ENCODE measurements at regions of chr10 and their contacts with region 1.

Region 1: GRCh38 chr10:62594093-62594520 is 210.4 kb upstream of the ADO start:
- DNase-seq: peak in 4 of 6 donors; percentile 18 to 76 (median 51)
- ATAC-seq: peak; percentile 56 to 96 (median 94)
- H3K4me3 ChIP-seq: no peak overlapping the region
- H3K27ac ChIP-seq: no peak overlapping the region
- H3K4me1 ChIP-seq: no peaks in the 10 kb centered on the region
- H3K27me3 ChIP-seq: no peaks in the 10 kb centered on the region
- CTCF ChIP-seq: peak; percentile 32 to 88 (median 77)

Region 2: GRCh38 chr10:62491597-62491996 is 102.5 kb before region 1 on chr10:
- intact Hi-C with region 1: no loop called
- DNase-seq: no peak
- ATAC-seq: no peak
- H3K4me3 ChIP-seq: no peak overlapping the region
- H3K27ac ChIP-seq: no peak overlapping the region
- H3K4me1 ChIP-seq: no peaks in the 10 kb centered on the region
- H3K27me3 ChIP-seq: no peaks in the 10 kb centered on the region
- CTCF ChIP-seq: no peak

Region 3: GRCh38 chr10:62511656-62512055 is 82.5 kb before region 1 on chr10:
- intact Hi-C with region 1: no loop called
- DNase-seq: no peak
- ATAC-seq: no peak
- H3K4me3 ChIP-seq: no peak overlapping the region
- H3K27ac ChIP-seq: no peak overlapping the region
- H3K4me1 ChIP-seq: no peaks in the 10 kb centered on the region
- H3K27me3 ChIP-seq: no peaks in the 10 kb centered on the region
- CTCF ChIP-seq: no peak

Region 4: DNA sequence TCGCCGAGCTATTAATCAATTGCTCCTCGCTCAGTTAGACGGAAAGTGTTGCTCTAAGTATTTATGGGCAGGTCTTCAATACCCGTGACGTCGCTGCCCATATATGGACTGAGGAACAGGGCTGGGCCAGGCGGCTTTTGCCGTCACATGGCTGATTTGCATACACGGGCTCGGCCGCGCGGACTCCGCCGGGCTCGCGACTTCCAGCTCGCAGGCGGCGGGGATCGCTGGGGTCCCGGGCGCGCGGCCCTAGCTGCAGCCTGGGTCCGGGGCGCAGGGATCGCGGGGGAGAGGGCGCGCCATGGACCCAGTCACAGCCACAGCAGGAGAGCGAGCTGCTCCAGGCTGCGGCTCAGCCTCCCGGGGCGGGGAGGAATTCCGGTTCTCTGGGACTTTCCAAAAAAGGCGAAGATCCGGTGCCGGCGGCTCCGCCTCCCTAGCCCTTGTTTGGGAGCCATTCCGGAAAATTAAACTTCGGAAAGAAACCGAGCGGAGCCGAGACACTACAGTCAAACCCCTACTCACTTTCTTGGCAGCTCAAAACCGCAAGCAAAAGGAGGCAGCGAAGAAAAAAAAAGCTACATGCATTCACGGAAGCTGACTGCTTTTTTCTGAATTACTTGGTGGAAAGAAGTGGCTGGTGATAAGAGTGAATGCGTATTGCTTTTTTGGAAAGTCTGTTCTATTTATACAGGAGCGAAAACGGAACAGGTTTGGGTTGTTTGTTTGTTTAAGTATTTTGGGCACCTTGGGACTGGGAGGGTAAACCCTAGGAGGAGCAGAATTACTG is 222.4 kb after region 1 on chr10 and contains the start of gene EGR2:
- intact Hi-C with region 1: loop called in 1 of 3 experiments (anchors 10 kb)
- DNase-seq: peak; percentile 87 to 94 (median 90)
- ATAC-seq: peak; percentile 83 to 89 (median 87)
- H3K4me3 ChIP-seq: peak within 1 kb of the TSS; percentile 69 to 93 (median 83)
- H3K27ac ChIP-seq: peak within 1 kb of the TSS; percentile 88 to 94 (median 89)
- H3K4me1 ChIP-seq: peaks cover 14 to 21% (median 18%) of the 10 kb centered on the region in 3 donors
- H3K27me3 ChIP-seq: peaks cover 0 to 33% (median 6%) of the 10 kb centered on the region in 4 donors
- CTCF ChIP-seq: no peak
- total RNA-seq, gene EGR2: 0.42 to 2.7 (median 1.2) TPM

Region 5: DNA sequence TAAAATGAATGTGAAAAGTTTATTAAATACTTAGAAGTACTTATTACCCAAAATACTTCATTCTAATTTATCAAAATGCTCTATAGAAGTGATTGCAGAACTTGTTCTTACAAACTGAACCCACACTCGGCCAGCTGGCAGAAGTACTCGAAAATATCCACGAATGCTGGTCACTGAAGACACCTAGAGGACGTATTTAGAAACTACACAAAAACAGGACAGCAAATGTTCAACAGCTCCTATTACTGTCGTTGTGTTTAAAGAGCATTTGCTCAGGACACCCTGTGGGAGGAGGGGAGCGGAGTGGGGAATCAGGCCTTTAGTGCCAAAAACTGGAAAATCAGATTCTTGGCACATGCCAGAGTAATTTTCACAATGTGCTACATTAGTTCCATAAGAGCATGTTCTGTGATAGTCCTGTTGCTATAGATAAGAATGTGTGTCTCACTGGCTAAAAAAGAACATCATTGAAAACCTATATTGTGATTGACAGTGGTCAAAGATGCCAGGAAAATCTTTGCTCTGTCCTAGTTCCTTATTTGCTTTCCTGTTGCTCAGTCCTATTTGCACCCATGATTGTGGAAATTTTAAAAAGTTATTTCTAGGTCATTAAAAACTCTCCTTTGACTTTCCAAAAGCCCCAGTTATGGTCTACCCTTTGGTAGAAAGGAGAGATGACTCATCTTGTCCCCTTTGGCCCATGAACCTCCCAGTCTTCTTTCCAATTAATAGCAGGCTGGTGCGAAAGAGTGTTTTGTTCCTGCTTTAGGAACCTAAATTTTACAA is 490.0 kb after region 1 on chr10:
- intact Hi-C with region 1: loop called in 1 of 3 experiments (anchors 5 kb)
- DNase-seq: peak in 4 of 6 donors; percentile 26 to 48 (median 33)
- ATAC-seq: peak; percentile 70 to 95 (median 93)
- H3K4me3 ChIP-seq: no peak overlapping the region
- H3K27ac ChIP-seq: no peak overlapping the region
- H3K4me1 ChIP-seq: no peaks in the 10 kb centered on the region
- H3K27me3 ChIP-seq: no peaks in the 10 kb centered on the region
- CTCF ChIP-seq: peak; percentile 47 to 65 (median 59)

Region 6: GRCh38 chr10:63157845-63158624 is 563.9 kb after region 1 on chr10:
- intact Hi-C with region 1: loop called in 1 of 3 experiments (anchors 10 kb)
- DNase-seq: peak in 3 of 6 donors; percentile 23 to 32 (median 31)
- ATAC-seq: peak; percentile 73 to 90 (median 87)
- H3K4me3 ChIP-seq: no peak overlapping the region
- H3K27ac ChIP-seq: no peak overlapping the region
- H3K4me1 ChIP-seq: no peaks in the 10 kb centered on the region
- H3K27me3 ChIP-seq: no peaks in the 10 kb centered on the region
- CTCF ChIP-seq: peak; percentile 61 to 83 (median 70)

Measured in pancreas (tissue), 10 donors.